Psoas muscle (tissue), 8 donors: ENCODE measurements at regions of chr1 and their contacts with region 1.

Region 1: DNA sequence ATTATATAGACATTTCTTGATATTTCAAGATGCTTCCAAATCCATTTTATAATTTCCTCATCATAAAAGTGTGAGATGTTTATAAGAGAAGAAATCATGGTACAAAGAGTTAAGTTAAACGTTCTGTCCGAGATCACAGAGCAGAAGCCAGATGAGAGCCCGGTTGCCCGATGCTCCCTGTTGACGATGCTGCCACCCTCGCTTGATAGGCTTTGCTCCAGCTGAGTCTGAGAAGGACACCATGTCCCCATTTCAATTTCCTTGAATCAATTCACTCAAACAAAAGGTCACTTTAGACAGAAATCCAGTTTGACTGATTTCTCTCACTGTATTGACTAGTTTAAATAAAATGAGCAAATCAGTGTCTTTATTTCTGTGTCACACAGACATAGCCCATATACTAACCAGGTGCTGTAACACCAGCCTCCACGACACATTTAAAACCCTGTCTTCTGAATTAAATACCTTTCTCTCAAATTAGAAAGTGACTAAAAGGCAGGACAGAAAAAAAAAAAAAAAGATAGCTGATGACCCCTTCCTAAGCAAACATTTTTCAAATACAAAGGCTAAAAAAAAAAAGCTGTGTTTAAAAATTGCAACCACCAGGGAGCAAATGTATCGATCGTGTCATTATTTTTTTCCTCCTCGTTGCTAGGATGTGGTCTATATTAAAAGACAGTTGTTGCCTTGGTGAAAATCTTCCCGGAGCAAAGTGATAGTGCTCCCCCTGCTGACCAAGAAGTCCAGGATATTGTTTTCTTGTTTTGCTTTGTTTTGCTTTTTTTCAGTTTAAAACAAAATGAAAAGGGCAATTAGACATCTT is 35.2 kb downstream of the DNASE2B start:
- DNase-seq: peak in 1 of 2 donors; percentile 14
- ATAC-seq: peak in 3 of 4 donors; percentile 80 to 96 (median 81)
- H3K4me3 ChIP-seq: peak overlapping the region; percentile 53
- H3K27ac ChIP-seq: no peak overlapping the region
- H3K4me1 ChIP-seq: no peaks in the 10 kb centered on the region
- H3K27me3 ChIP-seq: no peaks in the 10 kb centered on the region
- CTCF ChIP-seq: peak; percentile 76

Region 2: DNA sequence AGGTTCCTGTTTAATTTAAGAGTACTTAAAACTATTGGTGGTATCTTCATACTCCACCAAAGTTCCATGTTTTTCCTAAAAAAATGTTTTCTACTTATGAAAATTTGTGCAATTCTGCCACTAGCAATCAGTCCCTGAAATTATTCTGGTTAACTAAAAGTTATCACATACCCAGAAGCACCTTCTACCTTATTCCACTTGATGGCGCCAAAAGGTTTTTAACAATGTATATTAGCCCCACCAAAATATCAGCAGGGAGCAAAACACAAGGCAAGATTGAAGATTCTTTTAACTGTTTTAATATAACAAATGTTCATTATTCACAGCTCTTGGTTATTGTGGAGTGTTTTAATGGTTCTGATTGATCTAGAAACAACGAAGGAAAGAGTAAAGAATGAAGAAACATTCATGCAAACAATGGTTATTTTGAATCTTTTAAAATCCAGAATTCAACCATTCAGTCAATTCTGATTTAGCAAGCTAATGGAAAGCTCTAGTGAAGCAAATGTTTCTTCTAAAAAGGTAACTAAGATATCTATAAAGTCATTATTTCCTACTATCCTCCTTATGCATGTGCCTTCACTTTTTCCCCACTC is 501.7 kb before region 1 on chr1:
- intact Hi-C with region 1: loop called (anchors 5 kb)
- DNase-seq: no peak
- ATAC-seq: peak; percentile 64 to 89 (median 72)
- H3K4me3 ChIP-seq: no peak overlapping the region
- H3K27ac ChIP-seq: no peak overlapping the region
- H3K4me1 ChIP-seq: peaks cover 10% of the 10 kb centered on the region
- H3K27me3 ChIP-seq: no peaks in the 10 kb centered on the region
- CTCF ChIP-seq: peak; percentile 76

Region 3: DNA sequence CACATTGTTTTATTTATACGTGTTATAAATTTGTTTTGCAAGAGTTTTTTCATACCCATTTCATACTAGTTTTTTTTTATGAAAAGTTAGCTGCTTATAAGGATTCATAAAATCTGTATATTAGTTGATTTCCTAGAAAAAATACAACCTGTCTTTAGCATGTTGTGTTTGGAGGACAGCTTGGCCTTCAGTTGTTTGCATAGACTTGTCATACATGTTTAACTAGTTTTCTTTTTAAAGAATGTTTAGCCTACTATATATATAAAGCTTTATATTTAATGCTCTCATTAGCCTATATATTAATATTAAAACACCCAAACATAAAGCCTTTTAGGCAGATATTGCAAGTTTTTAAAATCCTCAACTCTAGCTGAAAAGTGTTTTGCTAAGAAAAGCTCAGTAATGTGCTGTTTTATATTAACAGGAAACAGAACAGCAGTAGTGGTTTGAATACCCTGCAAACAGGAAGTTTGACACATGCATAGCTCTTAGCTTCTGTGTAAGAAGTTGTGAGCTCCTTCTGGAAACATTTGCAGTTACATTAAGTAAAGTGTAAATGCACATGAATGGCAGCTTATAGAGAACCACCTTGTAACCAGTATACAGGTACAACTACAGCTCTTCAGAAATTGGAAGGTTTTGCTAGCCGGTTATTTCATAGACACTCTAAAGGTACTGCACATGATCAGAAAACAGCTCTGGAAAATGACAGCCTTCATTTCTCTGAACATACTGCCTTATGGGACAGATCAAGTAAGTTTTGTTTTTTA is 289.5 kb before region 1 on chr1 and contains the start of gene PRKACB:
- intact Hi-C with region 1: loop called (anchors 2 to 5 kb)
- DNase-seq: no peak
- ATAC-seq: no peak
- H3K4me3 ChIP-seq: peak within 1 kb of the TSS; percentile 26
- H3K27ac ChIP-seq: no peak within 1 kb of the TSS
- H3K4me1 ChIP-seq: no peaks in the 10 kb centered on the region
- H3K27me3 ChIP-seq: no peaks in the 10 kb centered on the region
- CTCF ChIP-seq: no peak
- total RNA-seq, gene PRKACB: 4.9 to 24.5 (median 13.6) TPM

Region 4: DNA sequence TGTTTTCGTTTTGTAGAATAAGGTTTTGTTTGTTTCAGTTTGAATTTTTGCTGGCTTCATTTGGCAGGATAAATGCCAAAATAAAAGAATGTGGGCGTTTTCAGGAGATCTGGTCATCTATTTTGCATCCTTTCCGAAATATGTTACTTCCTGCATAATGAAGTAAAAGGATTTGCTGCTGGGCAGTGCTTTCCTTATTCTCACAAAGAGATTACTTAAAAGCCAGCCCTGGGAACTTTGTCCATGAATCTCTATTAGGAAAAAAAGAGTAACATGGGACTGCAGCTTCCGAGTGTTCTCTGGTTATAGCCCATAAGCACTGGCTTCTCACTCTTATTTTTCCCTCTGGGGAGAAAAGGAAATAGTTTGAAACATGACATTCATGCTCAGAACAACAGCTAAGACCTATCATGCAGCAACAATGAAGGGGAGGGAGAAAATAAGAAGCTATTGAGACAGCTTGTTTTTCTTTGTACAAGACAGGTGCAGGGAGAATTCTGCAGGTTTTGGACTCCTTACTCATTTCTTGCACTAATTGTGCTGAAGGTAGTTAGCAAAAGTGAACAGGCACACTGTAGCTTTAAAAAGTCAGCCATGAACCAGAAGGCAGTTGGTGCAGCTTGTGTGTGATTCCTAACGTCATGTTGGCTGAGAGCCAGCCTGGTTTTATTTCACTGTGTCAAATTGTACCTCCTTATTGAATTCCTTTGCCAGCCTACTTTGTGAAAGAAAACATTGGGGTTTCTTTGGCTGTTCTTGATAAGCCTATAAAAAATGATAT is 132.3 kb before region 1 on chr1 and contains the start of gene SAMD13:
- intact Hi-C with region 1: loop called in 1 of 2 experiments (anchors 5 kb)
- DNase-seq: peak; percentile 50 to 65
- ATAC-seq: peak; percentile 48 to 66 (median 58)
- H3K4me3 ChIP-seq: peak within 1 kb of the TSS; percentile 96
- H3K27ac ChIP-seq: peak within 1 kb of the TSS; percentile 95
- H3K4me1 ChIP-seq: peaks cover 31% of the 10 kb centered on the region
- H3K27me3 ChIP-seq: no peaks in the 10 kb centered on the region
- CTCF ChIP-seq: no peak
- total RNA-seq, gene SAMD13: 0.65 to 3.2 (median 1.3) TPM

Region 5: DNA sequence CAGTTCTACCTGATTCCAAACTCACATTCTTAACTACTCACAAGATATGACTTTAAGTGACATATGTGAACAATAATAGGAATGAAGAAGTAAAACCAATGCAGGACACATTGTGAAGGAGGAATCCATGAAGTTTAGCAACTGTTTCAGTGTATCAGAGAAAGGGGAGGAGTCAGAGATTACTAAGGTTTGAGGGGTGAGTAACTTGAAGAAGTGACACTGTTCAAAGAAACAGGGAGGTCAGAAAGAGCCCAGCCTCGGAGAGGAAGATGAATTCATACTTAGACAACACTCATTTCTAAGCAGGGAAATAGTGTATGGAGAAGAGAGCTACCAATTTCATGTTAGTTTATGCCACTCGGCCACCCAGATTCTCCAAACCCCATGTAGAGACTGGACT is 17.4 kb after region 1 on chr1:
- intact Hi-C with region 1: no loop called
- DNase-seq: no peak
- ATAC-seq: no peak
- H3K4me3 ChIP-seq: no peak overlapping the region
- H3K27ac ChIP-seq: no peak overlapping the region
- H3K4me1 ChIP-seq: no peaks in the 10 kb centered on the region
- H3K27me3 ChIP-seq: no peaks in the 10 kb centered on the region
- CTCF ChIP-seq: no peak

Region 6: DNA sequence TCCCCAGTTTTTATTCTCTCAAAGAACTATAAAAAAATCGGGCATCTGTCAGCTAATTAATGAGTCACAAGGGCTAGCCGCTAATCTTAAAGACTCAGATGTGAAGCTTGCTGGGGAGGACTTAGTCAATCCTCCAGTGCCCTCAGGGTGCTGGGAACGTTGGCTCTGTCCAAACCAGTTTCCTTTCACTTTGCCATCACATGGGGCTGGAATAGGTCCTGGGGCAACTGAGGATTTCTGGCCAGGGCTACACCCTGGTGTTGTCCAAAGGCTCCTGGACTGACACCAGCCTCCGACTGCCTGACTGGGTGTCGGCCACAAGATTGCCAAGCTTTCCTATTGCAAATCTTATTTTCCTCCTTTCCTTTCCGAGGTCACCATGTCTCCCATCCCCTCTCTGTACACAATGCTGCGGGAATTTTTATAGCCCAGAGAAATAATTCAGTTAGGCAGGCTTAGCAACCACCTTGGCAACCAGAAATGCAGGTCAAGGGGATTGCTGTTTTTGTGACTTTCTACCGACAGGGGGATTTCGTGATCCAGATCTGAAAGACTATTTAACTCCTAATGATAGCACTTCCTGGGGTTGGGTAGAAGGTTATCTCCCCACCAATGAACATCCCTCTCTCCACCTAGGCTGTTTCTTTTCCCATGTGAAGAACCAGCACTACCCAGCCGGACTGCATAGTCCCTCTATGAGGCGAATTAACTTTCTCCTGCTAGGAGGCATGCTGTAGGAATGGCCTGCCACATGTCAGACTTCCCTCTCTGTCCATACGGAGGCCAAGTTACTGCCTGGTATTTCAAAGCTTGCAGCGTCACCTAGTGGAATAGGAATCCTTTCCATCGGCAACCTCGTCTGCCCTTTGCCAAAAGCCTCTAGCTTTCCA is 170.7 kb after region 1 on chr1:
- intact Hi-C with region 1: loop called in 1 of 2 experiments (anchors 10 kb)
- DNase-seq: peak in 1 of 2 donors; percentile 53
- ATAC-seq: peak; percentile 86 to 98 (median 91)
- H3K4me3 ChIP-seq: peak overlapping the region; percentile 47
- H3K27ac ChIP-seq: peak overlapping the region; percentile 49
- H3K4me1 ChIP-seq: peaks cover 10% of the 10 kb centered on the region
- H3K27me3 ChIP-seq: no peaks in the 10 kb centered on the region
- CTCF ChIP-seq: peak; percentile 63

Region 7: DNA sequence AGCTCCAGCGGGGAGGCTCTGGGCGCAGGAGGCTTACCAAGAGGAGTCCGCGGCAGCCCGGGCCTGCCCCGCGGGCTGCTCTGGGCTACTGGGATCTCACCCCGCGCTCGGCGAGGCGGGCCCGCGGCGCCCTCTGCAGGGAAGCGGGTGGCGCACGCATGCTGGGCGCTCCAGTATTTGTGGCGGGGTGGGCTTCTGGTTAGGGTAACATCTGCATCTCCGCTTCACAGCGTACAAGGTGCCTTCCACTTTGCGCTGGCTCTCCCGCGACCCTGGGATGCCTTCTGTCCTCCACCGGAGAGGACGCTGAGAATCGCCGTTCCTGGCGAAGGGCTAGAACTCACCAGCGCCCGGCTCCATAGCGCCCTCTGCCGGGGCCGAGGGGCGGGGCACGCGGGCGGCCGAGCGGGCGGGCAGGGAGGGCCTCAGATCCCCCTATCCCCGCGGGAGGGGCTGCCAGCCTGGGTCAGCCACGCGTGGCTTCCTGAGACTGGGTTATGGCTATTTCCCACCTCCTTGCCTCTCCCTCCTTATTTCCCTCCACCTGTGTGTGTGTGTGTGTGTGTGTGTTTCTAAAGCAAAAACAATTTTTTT is 187.3 kb after region 1 on chr1:
- intact Hi-C with region 1: loop called in 1 of 2 experiments (anchors 5 kb)
- DNase-seq: peak; percentile 74 to 87
- ATAC-seq: peak; percentile 92 to 98 (median 95)
- H3K4me3 ChIP-seq: peak overlapping the region; percentile 74
- H3K27ac ChIP-seq: no peak overlapping the region
- H3K4me1 ChIP-seq: no peaks in the 10 kb centered on the region
- H3K27me3 ChIP-seq: no peaks in the 10 kb centered on the region
- CTCF ChIP-seq: peak; percentile 95

Region 8: GRCh38 chr1:84753516-84754385 is 320.3 kb after region 1 on chr1:
- intact Hi-C with region 1: loop called in 1 of 2 experiments (anchors 10 kb)
- DNase-seq: peak; percentile 58 to 72
- ATAC-seq: peak; percentile 81 to 95 (median 88)
- H3K4me3 ChIP-seq: no peak overlapping the region
- H3K27ac ChIP-seq: no peak overlapping the region
- H3K4me1 ChIP-seq: no peaks in the 10 kb centered on the region
- H3K27me3 ChIP-seq: peaks cover 0 to 3% (median 0%) of the 10 kb centered on the region in 3 donors
- CTCF ChIP-seq: peak; percentile 96